GM12878 (cell line): ENCODE measurements at regions of chr1 and their contacts with region 1.

Region 1: DNA sequence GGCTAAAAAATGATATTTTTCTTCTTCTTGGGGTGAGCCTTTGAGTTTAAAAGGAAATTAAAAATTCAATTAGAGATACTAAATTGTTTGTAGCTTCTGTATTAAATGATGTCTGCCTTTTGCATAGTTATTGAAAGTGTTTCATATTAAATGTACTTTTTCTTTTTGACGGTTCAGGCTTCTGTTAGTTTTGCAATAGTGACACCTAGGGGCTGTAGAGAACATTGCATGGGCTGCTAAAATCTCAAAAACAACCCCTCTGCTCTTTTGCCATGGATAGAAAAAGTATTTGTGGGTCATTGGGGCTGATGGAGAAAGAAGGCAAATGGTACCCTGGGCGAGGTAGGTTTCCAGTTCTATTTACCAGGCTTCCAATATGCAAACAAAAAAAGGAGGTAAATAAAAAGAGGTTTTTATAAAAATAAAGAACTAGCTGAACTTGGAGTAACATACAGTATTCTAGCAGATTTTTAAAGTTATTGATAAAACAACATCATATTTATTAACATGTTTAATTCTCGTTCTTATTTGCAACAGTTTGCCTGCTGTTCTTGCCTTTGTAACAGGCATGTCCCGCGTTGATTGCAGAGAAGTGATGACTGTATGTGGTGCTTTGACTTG is 115.4 kb upstream of the HOOK1 start:
- DNase-seq: no peak
- ATAC-seq: peak; percentile 47
- H3K4me3 ChIP-seq: no peak overlapping the region
- H3K27ac ChIP-seq: no peak overlapping the region
- H3K4me1 ChIP-seq: peaks cover 10% of the 10 kb centered on the region; the same call in 1 of the 2 replicates
- H3K27me3 ChIP-seq: no peaks in the 10 kb centered on the region
- CTCF ChIP-seq: peak; percentile 83 to 89 (median 89)
- EP300 ChIP-seq: no peak
- POLR2A ChIP-seq: no peak
- RAD21 ChIP-seq: peak; percentile 98

Region 2: DNA sequence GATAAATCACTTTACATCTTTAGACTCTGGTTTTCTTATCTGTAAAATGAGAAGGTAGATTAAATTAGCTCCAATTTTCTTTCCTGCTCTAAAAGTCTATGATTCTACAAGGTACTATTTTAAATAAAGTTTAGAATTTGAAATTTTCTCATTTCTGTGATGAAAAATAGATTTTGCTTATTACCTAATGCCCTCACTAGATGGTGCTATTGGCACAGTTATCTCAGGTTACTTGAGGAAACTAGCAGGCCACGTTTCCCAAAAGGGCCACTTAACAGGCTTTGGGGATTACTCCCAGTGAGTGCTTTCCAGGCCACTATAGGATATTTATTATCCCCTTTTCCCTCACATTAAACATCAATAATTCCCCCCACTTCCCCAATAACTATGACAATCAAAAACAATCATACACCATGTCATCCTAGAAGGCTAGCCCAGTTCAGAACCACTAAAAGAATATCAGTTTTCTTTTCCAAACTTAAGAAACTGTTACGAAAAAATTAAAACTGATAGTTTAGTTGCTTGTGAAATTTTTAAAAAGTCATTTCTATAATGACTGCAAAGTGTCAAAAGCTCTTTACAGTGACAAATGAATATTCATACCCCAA is 1183.4 kb before region 1 on chr1:
- CTCF ChIA-PET with region 1: interaction called, 10 read pairs
- POLR2A ChIA-PET with region 1: no interaction called
- RAD21 ChIA-PET with region 1: interaction called, 5 read pairs
- SMC1A ChIA-PET with region 1: interaction called, 7 read pairs
- in situ Hi-C with region 1: no loop called
- intact Hi-C with region 1: loop called (anchors 5 kb)
- DNase-seq: peak; percentile 13
- ATAC-seq: peak; percentile 63
- H3K4me3 ChIP-seq: no peak overlapping the region
- H3K27ac ChIP-seq: no peak overlapping the region
- H3K4me1 ChIP-seq: no peaks in the 10 kb centered on the region
- H3K27me3 ChIP-seq: no peaks in the 10 kb centered on the region
- CTCF ChIP-seq: peak; percentile 47 to 72 (median 59); a peak in 5 of 6 replicates
- EP300 ChIP-seq: no peak
- POLR2A ChIP-seq: no peak
- RAD21 ChIP-seq: peak; percentile 88

Region 3: DNA sequence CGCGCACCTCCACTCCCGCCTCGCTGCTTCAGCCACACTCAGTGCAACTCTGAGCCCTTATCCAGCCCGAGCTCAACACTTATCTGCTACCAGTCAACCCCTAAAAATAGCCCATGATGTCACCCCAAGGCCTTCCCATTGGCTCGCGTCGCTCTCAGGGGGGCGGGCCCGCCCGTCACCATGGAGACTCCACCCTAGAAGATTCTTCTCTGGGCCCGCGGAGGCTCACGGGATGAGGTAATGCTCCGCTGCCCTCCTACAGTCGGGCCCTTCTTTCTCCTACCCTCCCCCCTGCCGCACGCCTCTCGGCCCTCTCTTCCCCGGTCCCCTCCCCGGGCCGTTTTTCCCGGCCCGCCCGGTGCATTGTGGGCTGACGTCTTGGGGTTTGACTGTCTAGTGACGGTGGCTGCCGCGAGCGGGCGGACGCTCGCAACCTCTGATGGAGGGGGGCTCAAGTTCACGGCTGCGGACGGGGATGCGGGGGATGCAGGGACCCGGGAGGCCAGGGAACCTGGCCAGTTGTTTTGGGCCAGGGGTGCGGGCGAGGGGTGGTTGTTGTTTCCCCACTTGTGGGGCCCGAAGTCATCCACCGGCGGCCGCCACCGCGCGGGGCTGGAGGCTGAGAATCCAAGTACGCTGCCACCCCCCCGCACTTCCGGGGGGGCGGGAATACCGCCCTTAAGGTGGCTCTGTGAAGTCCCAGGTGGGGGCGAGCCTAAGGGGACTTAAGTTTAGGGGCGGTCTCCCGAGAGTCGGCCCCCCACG is 915.2 kb before region 1 on chr1 and contains the start of gene JUN:
- CTCF ChIA-PET with region 1: interaction called, 39 read pairs
- POLR2A ChIA-PET with region 1: interaction called, 4 read pairs
- RAD21 ChIA-PET with region 1: interaction called, 43 read pairs
- SMC1A ChIA-PET with region 1: interaction called, 64 read pairs
- in situ Hi-C with region 1: no loop called
- intact Hi-C with region 1: loop called (anchors 2 kb)
- DNase-seq: peak; percentile 97
- ATAC-seq: peak; percentile 84
- H3K4me3 ChIP-seq: peak within 1 kb of the TSS; percentile 86
- H3K27ac ChIP-seq: peak within 1 kb of the TSS; percentile 90
- H3K4me1 ChIP-seq: peaks cover 11% of the 10 kb centered on the region
- H3K27me3 ChIP-seq: no peaks in the 10 kb centered on the region
- CTCF ChIP-seq: 0 out of 6 replicates have a peak, but pooled peaks of 1 of the 3 experiments have one; percentile 1
- EP300 ChIP-seq: peak in 1 of 2 experiments; percentile 62; a peak in 2 of 4 replicates
- POLR2A ChIP-seq: peak; percentile 99
- RAD21 ChIP-seq: no peak
- polyA plus RNA-seq, gene JUN: 0.18 to 0.37 TPM

Region 4: GRCh38 chr1:59146651-59147358 is 552.5 kb before region 1 on chr1:
- CTCF ChIA-PET with region 1: interaction called, 4 read pairs
- POLR2A ChIA-PET with region 1: no interaction called
- RAD21 ChIA-PET with region 1: interaction called, 6 read pairs
- SMC1A ChIA-PET with region 1: interaction called, 3 read pairs
- in situ Hi-C with region 1: no loop called
- intact Hi-C with region 1: loop called (anchors 5 kb)
- DNase-seq: no peak
- ATAC-seq: peak; percentile 87
- H3K4me3 ChIP-seq: peak overlapping the region; percentile 62
- H3K27ac ChIP-seq: peak overlapping the region; percentile 60
- H3K4me1 ChIP-seq: peaks cover 32% of the 10 kb centered on the region
- H3K27me3 ChIP-seq: no peaks in the 10 kb centered on the region
- CTCF ChIP-seq: peak in 2 of 3 experiments; percentile 1 to 18; a peak in 1 of 6 replicates
- EP300 ChIP-seq: no peak
- POLR2A ChIP-seq: peak; percentile 73
- RAD21 ChIP-seq: peak; percentile 41

Region 5: GRCh38 chr1:59340411-59341307 is 358.7 kb before region 1 on chr1:
- CTCF ChIA-PET with region 1: interaction called, 4 read pairs
- POLR2A ChIA-PET with region 1: no interaction called
- RAD21 ChIA-PET with region 1: interaction called, 3 read pairs
- SMC1A ChIA-PET with region 1: interaction called, 3 read pairs
- in situ Hi-C with region 1: no loop called
- intact Hi-C with region 1: loop called (anchors 5 kb)
- DNase-seq: peak; percentile 28
- ATAC-seq: peak; percentile 68
- H3K4me3 ChIP-seq: no peak overlapping the region
- H3K27ac ChIP-seq: no peak overlapping the region
- H3K4me1 ChIP-seq: no peaks in the 10 kb centered on the region
- H3K27me3 ChIP-seq: no peaks in the 10 kb centered on the region
- CTCF ChIP-seq: no peak
- EP300 ChIP-seq: no peak
- POLR2A ChIP-seq: no peak
- RAD21 ChIP-seq: no peak

Region 6: GRCh38 chr1:59605761-59606160 is 93.6 kb before region 1 on chr1:
- CTCF ChIA-PET with region 1: interaction called, 10 read pairs
- POLR2A ChIA-PET with region 1: no interaction called
- RAD21 ChIA-PET with region 1: interaction called, 4 read pairs
- SMC1A ChIA-PET with region 1: interaction called, 9 read pairs
- in situ Hi-C with region 1: no loop called
- intact Hi-C with region 1: no loop called
- DNase-seq: no peak
- ATAC-seq: peak; percentile 59
- H3K4me3 ChIP-seq: no peak overlapping the region
- H3K27ac ChIP-seq: no peak overlapping the region
- H3K4me1 ChIP-seq: no peaks in the 10 kb centered on the region; the same call in 1 of the 2 replicates
- H3K27me3 ChIP-seq: no peaks in the 10 kb centered on the region
- CTCF ChIP-seq: no peak
- EP300 ChIP-seq: no peak
- POLR2A ChIP-seq: no peak
- RAD21 ChIP-seq: no peak

Region 7: GRCh38 chr1:59743324-59744091 is 44.2 kb after region 1 on chr1:
- CTCF ChIA-PET with region 1: no interaction called
- POLR2A ChIA-PET with region 1: no interaction called
- RAD21 ChIA-PET with region 1: no interaction called
- SMC1A ChIA-PET with region 1: no interaction called
- in situ Hi-C with region 1: no loop called
- intact Hi-C with region 1: no loop called
- DNase-seq: no peak
- ATAC-seq: no peak
- H3K4me3 ChIP-seq: no peak overlapping the region
- H3K27ac ChIP-seq: no peak overlapping the region
- H3K4me1 ChIP-seq: no peaks in the 10 kb centered on the region
- H3K27me3 ChIP-seq: no peaks in the 10 kb centered on the region
- CTCF ChIP-seq: no peak
- EP300 ChIP-seq: no peak
- POLR2A ChIP-seq: no peak
- RAD21 ChIP-seq: no peak

Region 8: GRCh38 chr1:59759156-59759925 is 60.0 kb after region 1 on chr1:
- CTCF ChIA-PET with region 1: interaction called, 61 read pairs
- POLR2A ChIA-PET with region 1: interaction called, 3 read pairs
- RAD21 ChIA-PET with region 1: interaction called, 60 read pairs
- SMC1A ChIA-PET with region 1: interaction called, 37 read pairs
- in situ Hi-C with region 1: no loop called
- intact Hi-C with region 1: loop called (anchors 5 kb)
- DNase-seq: peak; percentile 46
- ATAC-seq: peak; percentile 98
- H3K4me3 ChIP-seq: no peak overlapping the region
- H3K27ac ChIP-seq: no peak overlapping the region
- H3K4me1 ChIP-seq: no peaks in the 10 kb centered on the region
- H3K27me3 ChIP-seq: no peaks in the 10 kb centered on the region
- CTCF ChIP-seq: peak; percentile 91 to 97 (median 96)
- EP300 ChIP-seq: no peak
- POLR2A ChIP-seq: no peak
- RAD21 ChIP-seq: peak; percentile 98

Region 9: DNA sequence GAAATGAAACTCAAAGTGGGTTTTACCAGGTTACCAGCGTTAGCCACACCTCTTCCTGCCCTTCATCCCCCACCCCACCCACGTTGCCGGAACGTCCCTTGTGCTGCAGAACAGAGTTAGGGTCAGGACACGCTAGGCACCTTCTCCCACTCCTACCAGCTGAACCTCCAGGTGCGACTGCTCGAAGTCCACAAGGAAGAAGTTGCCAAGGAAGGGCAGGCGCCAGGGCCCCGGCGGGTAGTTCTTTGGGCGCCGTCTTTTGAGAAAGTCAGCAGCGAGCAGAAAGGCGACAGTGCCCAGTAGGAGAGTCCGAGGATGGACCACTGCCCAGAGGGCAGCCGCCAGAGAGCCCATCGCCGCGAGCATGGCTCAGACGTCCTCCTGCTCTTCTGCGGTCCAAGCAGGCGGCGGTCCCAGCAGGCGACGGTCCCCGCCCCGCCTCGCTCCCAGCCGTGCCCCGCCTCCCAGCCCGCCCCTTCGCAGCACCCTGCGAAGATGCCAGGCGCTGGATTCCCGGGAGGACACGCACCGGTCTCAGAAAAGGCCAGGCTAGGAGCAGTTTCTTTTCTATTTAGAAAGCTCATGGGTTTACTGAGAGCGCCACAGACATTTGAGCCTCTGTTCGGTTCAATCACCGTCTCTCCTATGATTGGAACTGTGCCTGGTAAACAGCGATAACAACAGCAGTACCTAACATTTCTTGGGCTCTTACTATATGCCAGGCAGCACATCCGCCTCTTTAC is 227.2 kb after region 1 on chr1 and contains the start of gene CYP2J2:
- CTCF ChIA-PET with region 1: no interaction called
- POLR2A ChIA-PET with region 1: no interaction called
- RAD21 ChIA-PET with region 1: no interaction called
- SMC1A ChIA-PET with region 1: no interaction called
- in situ Hi-C with region 1: no loop called
- intact Hi-C with region 1: no loop called
- DNase-seq: peak; percentile 4
- ATAC-seq: peak; percentile 94
- H3K4me3 ChIP-seq: peak within 1 kb of the TSS; percentile 57
- H3K27ac ChIP-seq: no peak within 1 kb of the TSS
- H3K4me1 ChIP-seq: no peaks in the 10 kb centered on the region
- H3K27me3 ChIP-seq: peaks cover 0 to 8% of the 10 kb centered on the region in 2 experiments; a peak in 3 of 4 replicates
- CTCF ChIP-seq: no peak
- EP300 ChIP-seq: no peak
- POLR2A ChIP-seq: no peak
- RAD21 ChIP-seq: no peak
- polyA plus RNA-seq, gene CYP2J2: not detected